Tibial artery (tissue), 4 donors: ENCODE measurements at regions of chrX and their contacts with region 1.

Region 1: DNA sequence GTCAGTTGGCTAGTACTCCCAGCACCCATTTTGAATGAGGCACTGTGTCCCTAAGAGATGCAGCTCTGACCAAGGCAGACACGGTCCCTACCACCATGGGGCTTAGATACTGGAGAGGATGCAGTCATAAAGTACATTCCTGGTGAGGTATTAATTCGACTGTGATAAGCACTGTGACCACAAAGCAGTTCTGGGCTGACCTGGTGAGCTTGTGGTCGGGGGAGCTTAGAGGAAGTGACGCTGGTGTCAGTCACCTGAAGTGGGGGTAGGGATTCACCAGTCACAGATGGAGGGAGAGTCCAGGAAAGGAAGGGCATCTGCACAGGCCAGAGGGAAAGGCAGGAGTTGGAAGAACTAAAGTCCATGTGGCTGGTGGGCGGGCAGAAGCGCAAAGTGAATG is 15.8 kb upstream of the CLTRN start:
- DNase-seq: no peak
- H3K4me3 ChIP-seq: no peak overlapping the region
- H3K27ac ChIP-seq: no peak overlapping the region
- H3K4me1 ChIP-seq: peaks cover 0 to 12% (median 6%) of the 10 kb centered on the region in 4 donors
- H3K27me3 ChIP-seq: no peaks in the 10 kb centered on the region
- CTCF ChIP-seq: no peak

Region 2: DNA sequence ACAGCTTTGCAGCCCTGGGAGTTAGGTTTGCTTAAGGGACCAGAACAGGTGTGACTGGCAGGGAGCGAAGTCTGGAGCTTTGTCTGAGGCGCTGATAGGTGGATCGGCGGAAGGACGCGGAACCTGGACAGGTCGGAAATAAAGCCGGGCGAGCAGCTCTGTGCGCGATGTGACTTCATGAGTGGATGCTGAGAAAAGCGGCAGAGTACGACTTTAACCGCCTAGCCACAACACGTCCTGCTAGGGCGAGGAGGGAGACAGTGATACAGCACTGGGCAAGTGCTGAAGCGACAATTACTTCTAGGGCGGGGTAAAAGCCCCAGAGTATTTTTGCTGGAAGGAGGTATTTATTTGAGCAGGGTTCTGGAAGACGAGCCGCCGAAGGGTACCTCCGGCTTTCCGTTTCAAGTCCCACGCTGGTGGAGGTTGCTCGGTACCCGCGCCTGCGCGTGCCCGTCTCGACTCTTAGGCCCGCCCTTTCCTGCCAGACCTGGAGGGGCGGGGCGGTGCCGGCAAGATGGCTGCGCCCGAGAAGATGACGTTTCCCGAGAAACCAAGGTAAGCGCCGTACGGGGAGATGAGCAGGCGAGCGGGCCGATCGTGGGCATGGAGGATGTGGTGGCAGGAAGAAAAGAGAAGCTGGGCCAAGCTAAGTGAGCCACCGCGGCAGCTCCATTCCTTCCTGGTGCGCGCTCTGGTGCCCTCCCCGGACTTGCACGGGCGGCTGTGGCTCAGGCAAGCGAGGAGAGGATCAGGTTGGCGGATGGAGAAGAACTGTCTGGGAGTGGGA is 109.8 kb after region 1 on chrX and contains the start of gene ZRSR2:
- intact Hi-C with region 1: loop called (anchors 5 kb)
- DNase-seq: peak; percentile 75 to 86
- H3K4me3 ChIP-seq: peak within 1 kb of the TSS; percentile 70 to 73
- H3K27ac ChIP-seq: peak within 1 kb of the TSS; percentile 85 to 88
- H3K4me1 ChIP-seq: peaks cover 0 to 16% (median 6%) of the 10 kb centered on the region in 4 donors
- H3K27me3 ChIP-seq: no peaks in the 10 kb centered on the region
- CTCF ChIP-seq: peak in 1 of 2 experiments; percentile 6